ENCODE measurements at regions of chr12 and their contacts with region 1.

Region 1: DNA sequence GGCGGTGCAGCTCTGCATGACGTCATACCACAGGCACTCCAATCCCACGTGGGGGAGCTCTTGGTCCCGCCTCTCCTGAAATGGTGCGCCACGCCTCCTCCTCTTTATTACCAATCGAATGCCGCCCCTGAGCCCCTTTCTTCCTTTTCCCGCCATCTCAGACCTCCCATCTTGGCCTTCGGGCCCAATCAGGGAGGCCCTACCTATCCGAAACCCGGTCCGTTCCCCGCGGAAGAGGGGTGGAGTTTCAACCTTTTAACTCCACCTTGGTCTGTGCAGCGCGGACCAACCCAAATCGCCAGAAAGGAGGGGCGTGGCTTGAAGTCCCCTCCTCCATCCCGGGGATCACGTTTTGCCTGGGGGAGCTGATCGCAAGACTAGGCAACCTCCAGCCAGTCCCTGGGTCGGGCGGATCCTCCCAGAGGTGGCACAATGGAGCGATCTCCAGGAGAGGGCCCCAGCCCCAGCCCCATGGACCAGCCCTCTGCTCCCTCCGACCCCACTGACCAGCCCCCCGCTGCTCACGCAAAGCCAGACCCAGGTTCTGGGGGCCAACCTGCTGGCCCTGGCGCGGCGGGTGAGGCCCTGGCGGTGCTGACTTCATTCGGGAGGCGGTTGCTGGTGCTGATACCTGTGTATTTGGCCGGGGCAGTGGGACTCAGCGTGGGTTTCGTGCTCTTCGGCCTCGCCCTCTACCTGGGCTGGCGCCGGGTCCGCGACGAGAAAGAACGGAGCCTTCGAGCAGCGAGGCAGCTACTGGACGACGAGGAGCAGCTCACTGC is at the start of gene ESYT1:
- DNase-seq: peak; percentile 100
- ATAC-seq: peak; percentile 90
- H3K4me3 ChIP-seq: peak within 1 kb of the TSS; percentile 96
- H3K27ac ChIP-seq: peak within 1 kb of the TSS; percentile 39; the same call in 1 of the 2 replicates
- H3K4me1 ChIP-seq: peaks cover 33% of the 10 kb centered on the region
- H3K27me3 ChIP-seq: no peaks in the 10 kb centered on the region
- CTCF ChIP-seq: no peak
- total RNA-seq, gene ESYT1: 120 and 176 TPM in 2 replicates

Region 2: DNA sequence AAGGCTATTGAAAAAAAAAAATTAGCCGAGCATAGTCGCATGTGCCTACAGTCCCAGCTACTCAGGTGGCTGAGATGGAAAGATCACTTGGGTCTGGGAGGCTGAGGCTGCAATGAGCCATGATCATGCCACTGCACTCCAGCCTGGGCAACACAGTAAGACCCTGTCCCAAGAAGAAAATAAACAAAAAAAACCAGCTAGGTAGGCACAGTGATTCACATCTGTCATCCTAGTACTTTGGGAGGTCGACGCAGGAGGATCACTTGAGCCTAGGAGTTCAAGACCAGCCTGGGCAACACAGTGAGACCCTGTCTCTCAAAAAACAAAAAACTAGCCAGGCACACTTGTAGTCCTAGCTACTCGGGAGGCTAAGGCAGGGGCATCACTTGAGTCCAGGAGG is 318.8 kb before region 1 on chr12:
- CTCF ChIA-PET with region 1: no interaction called
- POLR2A ChIA-PET with region 1: no interaction called
- intact Hi-C with region 1: no loop called
- DNase-seq: no peak
- ATAC-seq: no peak
- H3K4me3 ChIP-seq: no peak overlapping the region
- H3K27ac ChIP-seq: no peak overlapping the region
- H3K4me1 ChIP-seq: no peaks in the 10 kb centered on the region
- H3K27me3 ChIP-seq: no peaks in the 10 kb centered on the region
- CTCF ChIP-seq: no peak

Region 3: GRCh38 chr12:56152318-56153033 is 24.4 kb after region 1 on chr12 and contains the start of gene MYL6B:
- CTCF ChIA-PET with region 1: interaction called, 3 read pairs
- POLR2A ChIA-PET with region 1: interaction called, 4 read pairs
- intact Hi-C with region 1: loop called (anchors 1 kb)
- DNase-seq: peak; percentile 94
- ATAC-seq: peak; percentile 85
- H3K4me3 ChIP-seq: peak within 1 kb of the TSS; percentile 84
- H3K27ac ChIP-seq: peak within 1 kb of the TSS; percentile 77
- H3K4me1 ChIP-seq: peaks cover 23% of the 10 kb centered on the region
- H3K27me3 ChIP-seq: no peaks in the 10 kb centered on the region
- CTCF ChIP-seq: no peak
- total RNA-seq, gene MYL6B: 153 and 178 TPM in 2 replicates

Region 4: DNA sequence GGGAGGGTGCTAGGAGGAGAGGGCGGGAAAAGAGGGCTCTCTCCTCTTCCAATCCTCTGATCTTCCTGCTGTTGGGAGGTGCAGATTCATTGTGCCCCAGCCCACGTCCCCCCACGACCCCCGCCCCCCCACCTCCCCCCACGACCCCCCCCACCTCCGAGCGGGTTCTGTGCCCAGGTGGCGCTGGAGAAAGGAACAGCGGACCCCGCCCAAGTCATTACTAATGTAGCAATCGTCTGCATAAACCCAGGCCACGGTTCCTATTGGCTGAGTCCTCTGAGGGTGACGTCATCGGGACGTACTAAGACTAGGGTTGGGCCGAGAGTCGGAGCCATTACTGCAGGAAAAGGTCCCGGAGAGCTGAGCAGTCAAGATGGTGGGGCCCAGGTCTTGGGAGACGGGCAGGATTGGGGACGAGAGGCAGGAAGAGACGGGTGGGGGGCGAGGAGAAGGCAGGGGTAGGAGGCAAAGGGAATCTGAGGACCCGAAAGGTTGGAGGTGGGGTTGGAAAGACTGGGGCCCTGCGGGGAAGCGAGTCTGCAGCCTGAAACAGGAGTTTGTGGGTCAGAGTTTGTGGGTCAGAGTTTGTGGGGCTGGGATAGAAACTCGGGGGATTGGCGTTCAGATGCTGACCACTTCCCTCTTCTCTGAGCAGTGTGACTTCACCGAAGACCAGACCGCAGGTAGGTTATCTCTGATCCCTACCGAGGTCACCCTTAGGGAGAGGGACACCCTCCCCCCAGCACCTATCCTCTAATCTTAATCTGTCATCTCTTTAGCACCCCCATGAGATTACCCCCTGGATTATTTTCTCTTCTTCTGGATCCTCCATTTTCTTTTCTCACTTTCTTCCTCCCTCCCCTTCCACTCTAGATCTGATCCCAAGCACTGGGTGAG is 30.2 kb after region 1 on chr12 and contains the start of gene MYL6:
- CTCF ChIA-PET with region 1: interaction called, 4 read pairs
- POLR2A ChIA-PET with region 1: interaction called, 6 read pairs
- intact Hi-C with region 1: loop called (anchors 1 kb)
- DNase-seq: peak; percentile 99
- ATAC-seq: peak; percentile 76
- H3K4me3 ChIP-seq: peak within 1 kb of the TSS; percentile 76
- H3K27ac ChIP-seq: peak within 1 kb of the TSS; percentile 73
- H3K4me1 ChIP-seq: peaks cover 28% of the 10 kb centered on the region
- H3K27me3 ChIP-seq: no peaks in the 10 kb centered on the region
- CTCF ChIP-seq: no peak
- total RNA-seq, gene MYL6: 1,385 and 1,597 TPM in 2 replicates